ENCODE measurements at regions of chr2 and their contacts with region 1.

Region 1: DNA sequence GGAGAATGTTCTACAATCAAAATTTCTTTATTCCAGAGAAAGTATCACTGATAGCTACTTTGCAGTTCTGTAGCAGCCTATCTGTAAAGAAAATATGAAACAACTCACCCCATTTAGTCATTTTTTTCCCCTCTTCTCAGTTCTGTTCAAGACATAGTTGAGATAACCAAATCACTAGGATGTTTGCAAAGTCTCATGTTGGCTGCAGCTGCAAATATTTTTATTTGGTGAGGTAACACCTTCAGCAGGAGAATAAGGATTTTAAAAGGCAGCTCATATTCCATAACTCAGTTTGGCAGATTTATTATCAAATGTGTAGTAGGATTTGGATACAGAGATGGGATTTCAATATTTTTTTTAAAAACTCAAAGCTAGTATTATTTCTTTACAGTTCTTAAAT is 41.0 kb downstream of the HNRNPLL start:
- DNase-seq: no peak
- ATAC-seq: no peak
- H3K4me3 ChIP-seq: no peak overlapping the region
- H3K27ac ChIP-seq: no peak overlapping the region
- H3K4me1 ChIP-seq: no peaks in the 10 kb centered on the region
- H3K27me3 ChIP-seq: no peaks in the 10 kb centered on the region
- CTCF ChIP-seq: no peak
- POLR2A ChIP-seq: no peak
- RAD21 ChIP-seq: no peak

Region 2: GRCh38 chr2:38465789-38466127 is 95.9 kb before region 1 on chr2:
- CTCF ChIA-PET with region 1: no interaction called
- POLR2A ChIA-PET with region 1: no interaction called
- dilution Hi-C with region 1: no loop called
- in situ Hi-C with region 1: no loop called
- intact Hi-C with region 1: no loop called
- DNase-seq: peak; percentile 21
- ATAC-seq: no peak
- H3K4me3 ChIP-seq: no peak overlapping the region
- H3K27ac ChIP-seq: no peak overlapping the region
- H3K4me1 ChIP-seq: peaks cover 7% of the 10 kb centered on the region; the same call in 1 of the 2 replicates
- H3K27me3 ChIP-seq: peaks cover 40% of the 10 kb centered on the region
- CTCF ChIP-seq: peak; percentile 32
- POLR2A ChIP-seq: no peak
- RAD21 ChIP-seq: peak; percentile 36; the same call in 1 of the 2 replicates

Region 3: DNA sequence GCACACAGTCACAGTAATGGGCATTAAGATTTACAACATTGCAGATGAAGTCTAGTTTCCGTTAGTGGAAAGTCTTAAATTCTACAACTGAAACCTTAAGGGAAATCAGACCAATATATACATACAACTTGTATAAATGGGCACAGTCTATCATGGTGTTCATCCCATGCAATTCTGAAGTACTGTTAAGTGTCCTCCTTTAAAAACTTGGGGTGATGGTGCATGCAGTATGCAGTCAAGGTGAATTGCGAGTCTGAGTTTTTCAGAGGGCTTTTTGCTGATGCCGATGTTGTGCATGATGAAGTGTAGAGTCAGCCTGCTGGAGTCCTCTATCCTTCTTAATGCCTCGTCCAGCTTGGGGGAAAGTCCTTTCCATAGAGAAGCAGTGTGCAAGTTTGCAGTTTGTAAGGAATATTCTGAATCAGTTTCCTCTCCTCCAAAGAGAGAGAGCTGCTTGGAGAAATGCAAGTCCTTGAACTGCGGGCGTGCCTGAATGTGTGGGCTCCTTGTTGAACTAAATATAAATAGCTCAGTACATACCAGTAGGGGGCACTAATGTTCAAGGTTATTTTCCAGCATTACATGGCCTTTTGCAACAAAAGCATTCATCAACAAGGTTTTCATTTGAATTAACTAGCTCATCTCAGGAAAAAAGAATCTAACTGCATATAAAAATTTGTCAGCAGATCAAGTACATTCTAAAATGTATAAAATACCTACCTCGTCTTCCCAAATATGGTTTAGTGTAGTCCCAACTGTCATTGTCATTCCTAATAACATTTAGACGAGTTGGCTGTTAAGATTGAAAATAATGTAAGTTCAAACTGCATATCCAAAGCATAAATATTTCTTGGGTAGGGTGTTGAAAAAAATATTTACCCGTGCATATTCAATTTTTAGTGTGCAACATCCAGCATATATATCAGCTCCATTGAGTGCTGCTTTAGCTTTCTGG is 19.8 kb after region 1 on chr2:
- CTCF ChIA-PET with region 1: interaction called, 10 read pairs
- POLR2A ChIA-PET with region 1: no interaction called
- dilution Hi-C with region 1: no loop called
- in situ Hi-C with region 1: no loop called
- intact Hi-C with region 1: no loop called
- DNase-seq: peak; percentile 82
- ATAC-seq: peak; percentile 75
- H3K4me3 ChIP-seq: no peak overlapping the region
- H3K27ac ChIP-seq: no peak overlapping the region
- H3K4me1 ChIP-seq: peaks cover 5% of the 10 kb centered on the region
- H3K27me3 ChIP-seq: no peaks in the 10 kb centered on the region
- CTCF ChIP-seq: peak; percentile 79
- POLR2A ChIP-seq: no peak
- RAD21 ChIP-seq: peak; percentile 83